Prostate gland (tissue), 2 donors: ENCODE measurements at regions of chr12 and their contacts with region 1.

Region 1: DNA sequence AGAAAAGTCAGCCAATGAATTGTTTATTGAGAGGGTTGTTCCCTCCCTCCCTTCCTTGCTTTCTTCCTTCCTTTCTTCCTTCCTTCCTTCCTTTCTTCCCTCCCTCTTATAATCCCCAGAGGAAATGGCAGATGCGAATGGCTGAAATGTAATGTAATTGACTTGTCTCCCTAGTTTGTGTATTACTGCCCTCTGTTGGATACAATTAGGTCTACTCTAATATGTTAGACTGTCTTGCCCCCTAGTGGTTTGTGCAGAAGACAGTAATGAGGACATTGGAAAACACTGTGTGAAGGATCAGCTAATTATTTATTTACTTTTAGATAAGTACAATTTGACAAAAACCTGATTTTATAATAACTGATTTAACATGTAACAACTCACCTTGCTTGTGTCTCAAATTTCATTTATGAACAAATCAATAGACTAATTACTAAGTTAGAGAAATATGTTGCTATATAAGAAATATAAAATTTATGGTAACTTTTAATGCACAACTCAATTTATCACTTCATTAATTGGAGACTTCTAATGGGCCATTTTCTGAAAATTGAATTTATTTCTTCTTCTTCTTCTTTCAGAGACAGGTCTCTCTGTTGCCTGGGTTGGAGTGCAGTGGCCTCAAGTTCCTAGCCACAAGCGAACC is 229.8 kb upstream of the LRIG3 start:
- DNase-seq: peak; percentile 22
- H3K4me3 ChIP-seq: no peak overlapping the region
- H3K27ac ChIP-seq: no peak overlapping the region
- H3K4me1 ChIP-seq: no peaks in the 10 kb centered on the region
- H3K27me3 ChIP-seq: no peaks in the 10 kb centered on the region
- CTCF ChIP-seq: peak; percentile 63 to 97 (median 94)
- POLR2A ChIP-seq: no peak

Region 2: GRCh38 chr12:58988643-58989344 is 161.3 kb before region 1 on chr12:
- intact Hi-C with region 1: no loop called
- DNase-seq: no peak
- H3K4me3 ChIP-seq: no peak overlapping the region
- H3K27ac ChIP-seq: no peak overlapping the region
- H3K4me1 ChIP-seq: no peaks in the 10 kb centered on the region
- H3K27me3 ChIP-seq: no peaks in the 10 kb centered on the region
- CTCF ChIP-seq: no peak
- POLR2A ChIP-seq: no peak

Region 3: DNA sequence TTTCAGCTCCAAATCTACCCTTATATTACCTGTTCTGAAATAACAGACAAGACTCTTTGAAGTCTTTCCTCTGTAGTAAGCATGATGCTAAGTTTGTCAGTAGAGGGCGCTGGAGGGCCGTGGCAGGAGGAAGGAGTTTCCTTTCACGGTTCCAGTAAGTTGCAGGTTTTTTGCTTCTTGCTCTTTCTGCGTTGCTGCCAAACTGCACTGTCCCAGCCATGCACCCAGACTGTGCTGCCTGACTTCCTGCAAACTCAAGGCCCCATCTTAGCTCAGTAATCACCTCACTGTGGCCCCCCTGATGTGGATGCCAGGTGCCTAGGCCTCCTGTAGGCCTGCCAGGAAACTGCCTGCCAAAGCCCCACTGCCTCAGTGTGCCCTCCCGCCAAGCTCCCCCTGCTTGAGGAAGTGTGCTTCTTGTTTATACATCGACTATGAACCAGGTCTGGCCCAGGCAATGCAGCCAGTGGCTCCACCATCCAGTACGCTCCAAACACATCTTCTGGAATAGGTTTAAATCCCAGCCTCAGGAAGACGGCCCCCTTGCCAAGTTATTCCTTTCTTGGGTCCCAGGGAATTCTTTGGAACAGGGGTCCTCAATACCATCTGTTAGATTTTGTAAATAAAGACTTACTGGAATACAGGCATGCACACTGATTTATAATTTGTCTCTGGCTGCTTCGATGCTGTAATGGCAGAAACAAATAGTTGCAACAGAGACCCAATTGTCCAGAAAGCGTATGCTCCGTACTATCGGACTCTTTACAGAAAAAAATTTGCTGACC is 36.1 kb before region 1 on chr12:
- intact Hi-C with region 1: loop called (anchors 2 kb)
- DNase-seq: peak; percentile 60
- H3K4me3 ChIP-seq: no peak overlapping the region
- H3K27ac ChIP-seq: no peak overlapping the region
- H3K4me1 ChIP-seq: no peaks in the 10 kb centered on the region
- H3K27me3 ChIP-seq: no peaks in the 10 kb centered on the region
- CTCF ChIP-seq: peak in 3 of 4 experiments; percentile 52 to 65 (median 60)
- POLR2A ChIP-seq: no peak